AG04449 (cell line): ENCODE measurements at regions of chr20 and their contacts with region 1.

Region 1: DNA sequence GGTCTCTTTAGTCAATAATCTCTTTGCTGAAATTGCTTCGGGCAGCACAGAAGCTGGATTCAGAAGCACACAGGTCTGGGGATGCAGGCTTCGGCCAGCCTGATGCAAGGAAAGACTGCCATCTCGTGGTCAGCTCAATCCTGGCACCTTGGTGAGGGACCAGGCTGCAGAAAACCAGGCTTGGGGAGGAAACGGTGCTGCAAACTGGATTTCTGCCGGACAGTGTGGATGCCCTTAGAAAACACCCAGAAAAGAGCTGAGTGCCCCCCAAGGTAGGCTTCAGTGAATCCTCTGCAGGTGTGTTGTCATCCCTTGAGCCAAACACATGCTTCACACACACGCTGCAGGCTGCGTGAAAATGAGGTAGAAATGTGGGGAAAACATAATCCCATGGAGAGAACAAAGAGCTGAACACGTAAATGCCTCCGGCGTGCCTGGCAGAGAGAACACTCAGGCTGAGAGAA is 89.8 kb upstream of the PAX1 start:
- DNase-seq: peak; percentile 3
- H3K4me3 ChIP-seq: no peak overlapping the region
- CTCF ChIP-seq: peak; percentile 87

Region 2: DNA sequence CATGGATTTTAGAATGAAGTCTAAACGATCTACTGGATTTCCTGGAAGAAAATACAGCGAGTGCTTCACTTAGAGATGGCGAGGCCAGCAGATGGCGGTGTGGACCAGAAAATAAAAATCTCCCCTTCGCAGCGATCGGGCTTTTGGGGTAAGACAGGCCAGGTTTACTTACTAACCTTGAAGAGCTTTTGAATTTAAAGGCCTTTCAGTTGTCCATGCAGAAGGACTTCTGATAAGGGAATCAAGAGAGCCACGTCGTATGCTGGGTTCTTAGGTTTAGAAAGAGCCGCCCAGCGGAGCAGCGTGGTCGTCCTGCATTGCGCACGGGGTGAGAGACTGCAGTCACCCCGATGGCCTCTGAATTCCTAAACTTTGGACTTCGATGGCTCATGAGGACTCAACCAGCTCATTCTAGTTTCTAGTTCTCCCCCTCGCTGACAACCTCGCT is 778.1 kb before region 1 on chr20:
- CTCF ChIA-PET with region 1: interaction called, 27 read pairs
- POLR2A ChIA-PET with region 1: no interaction called
- DNase-seq: no peak
- H3K4me3 ChIP-seq: no peak overlapping the region
- CTCF ChIP-seq: peak; percentile 60

Region 3: DNA sequence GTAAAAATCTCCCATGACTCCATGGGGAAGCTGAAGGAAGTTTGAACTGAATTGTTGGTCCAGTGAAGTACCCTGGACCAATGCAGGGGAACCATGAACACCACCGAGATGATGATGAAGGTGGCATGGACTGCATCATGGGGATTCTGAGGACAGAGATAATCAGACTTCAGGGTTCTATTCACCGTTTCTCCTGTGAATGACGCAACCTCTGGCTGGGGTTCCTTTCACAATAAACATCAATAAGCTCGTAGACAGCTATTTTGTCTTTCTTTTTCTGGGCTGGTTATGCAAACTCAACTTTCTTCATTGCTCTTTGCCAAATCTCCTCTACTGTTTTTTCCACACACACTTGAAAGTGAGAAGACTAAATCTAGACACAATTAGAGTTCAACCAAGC is 13.8 kb before region 1 on chr20:
- CTCF ChIA-PET with region 1: interaction called, 15 read pairs
- POLR2A ChIA-PET with region 1: no interaction called
- DNase-seq: no peak
- H3K4me3 ChIP-seq: no peak overlapping the region
- CTCF ChIP-seq: no peak